Natural killer cell (primary cell): ENCODE measurements at regions of chr10 and their contacts with region 1.

Region 1: GRCh38 chr10:97686962-97687784 is at the start of gene AVPI1:
- DNase-seq: peak; percentile 94 to 98
- ATAC-seq: peak; percentile 92 to 98 (median 93)
- H3K4me3 ChIP-seq: peak within 1 kb of the TSS; percentile 80
- H3K4me3 Mint-ChIP-seq: peak within 1 kb of the TSS; percentile 85
- H3K27ac ChIP-seq: peak within 1 kb of the TSS; percentile 65
- H3K27ac Mint-ChIP-seq: peak within 1 kb of the TSS; percentile 76 to 80
- H3K4me1 ChIP-seq: peaks cover 21% of the 10 kb centered on the region
- H3K4me1 Mint-ChIP-seq: peaks cover 9 to 18% of the 10 kb centered on the region in 2 donors
- H3K27me3 ChIP-seq: no peaks in the 10 kb centered on the region
- H3K27me3 Mint-ChIP-seq: no peaks in the 10 kb centered on the region
- CTCF ChIP-seq: no peak
- total RNA-seq, gene AVPI1: 6.1 to 8.4 (median 6.8) TPM

Region 2: GRCh38 chr10:97648562-97649404 is 38.4 kb before region 1 on chr10:
- intact Hi-C with region 1: loop called (anchors 2 kb)
- DNase-seq: peak; percentile 42 to 72
- ATAC-seq: peak; percentile 96 to 100 (median 98)
- H3K4me3 ChIP-seq: peak overlapping the region; percentile 5
- H3K4me3 Mint-ChIP-seq: peak overlapping the region; percentile 84
- H3K27ac ChIP-seq: peak overlapping the region; percentile 83
- H3K27ac Mint-ChIP-seq: peak overlapping the region; percentile 93 to 94
- H3K4me1 ChIP-seq: peaks cover 20% of the 10 kb centered on the region
- H3K4me1 Mint-ChIP-seq: peaks cover 19 to 31% of the 10 kb centered on the region in 2 donors
- H3K27me3 ChIP-seq: no peaks in the 10 kb centered on the region
- H3K27me3 Mint-ChIP-seq: no peaks in the 10 kb centered on the region
- CTCF ChIP-seq: no peak

Region 3: DNA sequence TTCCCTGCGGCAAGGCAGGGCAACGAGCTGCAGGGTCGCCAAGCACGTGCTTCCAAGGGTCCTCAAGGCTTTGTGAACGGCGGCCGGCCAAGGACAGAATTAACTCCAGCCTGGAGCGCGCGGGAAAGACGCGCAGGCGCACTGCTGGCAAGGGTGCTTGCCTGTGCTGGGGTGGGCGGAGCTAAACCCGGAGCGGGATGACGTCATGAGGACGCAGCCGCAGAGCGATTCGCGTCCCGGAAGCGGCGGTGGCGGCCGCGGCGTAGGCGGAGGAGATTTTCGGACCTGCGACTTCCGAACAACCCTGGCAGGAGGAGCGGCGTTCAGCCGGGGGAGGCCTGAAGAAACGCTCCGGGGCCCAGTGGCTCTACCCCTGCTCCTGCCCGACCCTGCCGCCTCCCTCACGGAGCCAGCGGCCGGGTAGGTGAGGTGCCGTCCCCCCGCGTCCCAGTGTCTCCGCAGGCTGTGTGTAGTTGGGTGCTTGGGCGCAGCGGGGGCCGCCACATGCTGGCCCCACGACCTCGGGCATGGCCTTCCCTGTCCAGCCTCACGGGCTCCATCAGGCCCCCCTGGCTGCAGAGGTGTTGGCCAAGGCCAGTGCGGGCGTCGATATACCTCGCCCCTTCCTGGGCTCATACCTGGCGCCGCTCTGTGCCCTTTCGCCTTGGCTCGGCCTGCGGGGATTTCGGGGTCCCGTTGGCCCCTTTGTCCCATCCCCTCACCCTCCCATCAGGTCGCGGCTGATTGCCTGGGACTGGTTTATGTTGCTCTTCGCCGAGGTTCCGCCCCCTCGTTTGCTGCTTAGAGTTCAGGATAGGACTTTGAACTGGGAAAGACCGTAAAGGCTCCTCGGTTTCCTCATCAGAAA is 50.0 kb after region 1 on chr10 and contains the start of gene ZFYVE27:
- intact Hi-C with region 1: loop called (anchors 2 kb)
- DNase-seq: peak; percentile 97 to 98
- ATAC-seq: peak; percentile 93 to 95 (median 94)
- H3K4me3 ChIP-seq: peak within 1 kb of the TSS; percentile 93
- H3K4me3 Mint-ChIP-seq: peak within 1 kb of the TSS; percentile 96
- H3K27ac ChIP-seq: peak within 1 kb of the TSS; percentile 97
- H3K27ac Mint-ChIP-seq: peak within 1 kb of the TSS; percentile 96 to 98
- H3K4me1 ChIP-seq: peaks cover 21% of the 10 kb centered on the region
- H3K4me1 Mint-ChIP-seq: peaks cover 46 to 56% of the 10 kb centered on the region in 2 donors
- H3K27me3 ChIP-seq: no peaks in the 10 kb centered on the region
- H3K27me3 Mint-ChIP-seq: no peaks in the 10 kb centered on the region
- CTCF ChIP-seq: no peak
- total RNA-seq, gene ZFYVE27: 63.0 to 82.8 (median 76.4) TPM